ENCODE measurements at regions of chr7 and their contacts with region 1.

Region 1: DNA sequence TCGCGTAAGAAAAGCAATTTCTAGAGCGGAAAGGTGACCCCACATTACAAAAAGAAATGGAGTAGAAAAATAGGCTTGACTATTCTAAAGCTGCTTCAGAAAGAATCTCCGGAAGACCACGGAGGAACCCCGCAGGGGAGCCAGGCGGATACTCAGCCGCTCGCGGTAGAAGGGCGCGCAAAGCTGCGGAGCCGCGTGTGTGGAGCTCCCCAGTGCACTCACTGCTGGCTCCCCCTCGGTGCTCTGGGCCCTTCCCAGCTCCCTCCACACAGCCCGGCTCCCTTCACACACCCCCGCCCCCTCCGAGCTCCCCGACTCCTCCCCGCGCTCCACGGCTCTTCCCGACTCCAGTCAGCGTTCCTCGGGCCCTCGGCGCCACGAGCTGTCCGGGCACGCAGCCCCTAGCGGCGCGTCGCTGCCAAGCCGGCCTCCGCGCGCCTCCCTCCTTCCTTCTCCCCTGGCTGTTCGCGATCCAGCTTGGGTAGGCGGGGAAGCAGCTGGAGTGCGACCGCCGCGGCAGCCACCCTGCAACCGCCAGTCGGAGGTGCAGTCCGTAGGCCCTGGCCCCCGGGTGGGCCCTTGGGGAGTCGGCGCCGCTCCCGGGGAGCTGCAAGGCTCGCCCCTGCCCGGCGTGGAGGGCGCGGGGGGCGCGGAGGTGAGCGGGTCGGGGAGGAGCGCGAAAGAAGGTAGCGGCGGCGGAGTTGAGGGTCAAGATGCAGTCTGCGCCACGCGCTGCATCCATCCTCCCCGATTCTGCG is at the start of gene STEAP2:
- DNase-seq: peak; percentile 94
- H3K4me3 ChIP-seq: peak within 1 kb of the TSS; percentile 63 to 85 (median 67)
- H3K27ac ChIP-seq: peak within 1 kb of the TSS; percentile 75
- H3K4me1 ChIP-seq: peaks cover 12% of the 10 kb centered on the region
- H3K27me3 ChIP-seq: no peaks in the 10 kb centered on the region
- CTCF ChIP-seq: peak; percentile 63 to 84
- POLR2A ChIP-seq: peak; percentile 65
- total RNA-seq, gene STEAP2: 4.2 and 4.6 TPM in 2 replicates

Region 2: DNA sequence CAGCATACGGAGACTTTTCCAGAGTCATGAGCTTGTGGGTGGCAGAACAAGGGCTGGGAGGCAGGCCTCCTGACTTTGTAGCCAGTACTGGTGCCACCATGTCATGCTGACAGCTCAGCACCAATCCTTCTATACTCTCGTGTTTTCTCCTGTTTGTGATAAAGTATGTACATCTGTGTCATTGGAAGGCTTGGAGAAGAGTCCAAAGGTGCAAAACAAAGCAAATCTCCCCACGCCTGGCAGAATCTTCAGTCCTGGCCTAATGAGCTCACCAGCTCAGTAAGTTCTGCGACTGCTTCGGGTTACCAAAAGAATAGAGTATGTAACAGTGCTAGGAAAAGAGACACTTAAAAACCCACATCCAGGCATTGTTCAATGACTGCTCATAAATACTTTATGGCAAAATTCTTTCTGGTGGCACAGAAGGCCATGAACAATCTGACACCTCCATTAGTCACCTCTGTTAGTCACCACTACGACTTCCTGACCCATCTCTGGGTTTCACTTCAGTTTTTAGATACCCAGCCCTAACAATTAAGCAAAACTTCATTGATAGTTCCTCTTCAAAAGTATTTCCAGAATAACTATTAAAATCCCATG is 32.8 kb before region 1 on chr7:
- CTCF ChIA-PET with region 1: interaction called, 20 read pairs
- POLR2A ChIA-PET with region 1: interaction called, 5 read pairs
- dilution Hi-C with region 1: no loop called
- intact Hi-C with region 1: loop called (anchors 1 kb)
- DNase-seq: peak; percentile 85
- H3K4me3 ChIP-seq: peak overlapping the region in 1 of 3 experiments; percentile 5
- H3K27ac ChIP-seq: peak overlapping the region; percentile 93
- H3K4me1 ChIP-seq: peaks cover 36% of the 10 kb centered on the region
- H3K27me3 ChIP-seq: no peaks in the 10 kb centered on the region
- CTCF ChIP-seq: no peak
- POLR2A ChIP-seq: no peak

Region 3: GRCh38 chr7:90227259-90227658 is 15.7 kb after region 1 on chr7:
- CTCF ChIA-PET with region 1: interaction called, 7 read pairs
- POLR2A ChIA-PET with region 1: no interaction called
- dilution Hi-C with region 1: no loop called
- intact Hi-C with region 1: loop called (anchors 2 kb)
- DNase-seq: no peak
- H3K4me3 ChIP-seq: no peak overlapping the region
- H3K27ac ChIP-seq: no peak overlapping the region
- H3K4me1 ChIP-seq: peaks cover 1% of the 10 kb centered on the region
- H3K27me3 ChIP-seq: no peaks in the 10 kb centered on the region
- CTCF ChIP-seq: no peak
- POLR2A ChIP-seq: no peak

Region 4: DNA sequence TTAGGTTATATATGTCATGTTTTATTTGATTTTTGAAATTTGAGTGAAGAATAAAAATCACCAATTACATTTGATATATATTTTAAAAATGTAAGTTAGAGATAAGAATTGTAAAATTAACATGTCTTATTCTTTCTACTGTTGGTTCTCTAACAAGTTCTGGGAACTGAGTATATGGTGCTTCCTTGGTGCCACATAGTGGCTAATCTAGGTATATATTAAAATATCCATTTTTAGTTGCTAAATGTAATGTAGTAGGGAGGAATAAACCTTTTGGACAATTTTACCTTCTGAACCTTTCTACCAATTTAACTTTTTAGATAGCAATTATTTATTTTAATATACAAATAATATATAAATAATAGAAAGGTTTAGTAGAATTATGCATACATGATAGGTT is 50.9 kb after region 1 on chr7:
- CTCF ChIA-PET with region 1: interaction called, 10 read pairs
- POLR2A ChIA-PET with region 1: no interaction called
- dilution Hi-C with region 1: no loop called
- intact Hi-C with region 1: loop called (anchors 2 kb)
- DNase-seq: peak; percentile 54
- H3K4me3 ChIP-seq: no peak overlapping the region
- H3K27ac ChIP-seq: no peak overlapping the region
- H3K4me1 ChIP-seq: peaks cover 8% of the 10 kb centered on the region
- H3K27me3 ChIP-seq: no peaks in the 10 kb centered on the region
- CTCF ChIP-seq: peak in 1 of 2 donors; percentile 15
- POLR2A ChIP-seq: no peak

Region 5: DNA sequence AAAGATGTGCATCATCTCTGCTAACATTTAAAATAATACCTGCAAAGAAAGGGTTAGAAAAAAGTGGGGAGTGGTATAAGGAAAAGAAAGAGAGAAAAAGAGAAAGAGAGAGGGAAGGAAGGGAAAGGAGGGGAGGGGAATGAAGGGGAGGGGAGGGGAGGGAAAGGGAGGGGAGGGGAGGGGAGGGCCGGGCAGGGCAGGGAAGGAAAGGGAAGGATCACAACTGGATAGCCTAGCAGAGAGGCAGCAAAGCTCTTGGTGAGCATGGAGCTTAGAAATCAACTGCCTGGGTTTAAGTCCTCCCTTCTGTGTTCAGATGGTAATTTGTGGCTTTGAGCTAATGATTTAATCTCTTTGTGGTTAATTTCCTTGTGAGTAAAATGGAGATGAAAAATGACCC is 114.9 kb after region 1 on chr7:
- CTCF ChIA-PET with region 1: no interaction called
- POLR2A ChIA-PET with region 1: no interaction called
- dilution Hi-C with region 1: no loop called
- intact Hi-C with region 1: no loop called
- DNase-seq: no peak
- H3K4me3 ChIP-seq: no peak overlapping the region
- H3K27ac ChIP-seq: no peak overlapping the region
- H3K4me1 ChIP-seq: no peaks in the 10 kb centered on the region
- H3K27me3 ChIP-seq: peaks cover 17 to 50% of the 10 kb centered on the region in 2 experiments
- CTCF ChIP-seq: no peak
- POLR2A ChIP-seq: no peak

Region 6: GRCh38 chr7:90412458-90413184 is 201.1 kb after region 1 on chr7:
- CTCF ChIA-PET with region 1: interaction called, 5 read pairs
- POLR2A ChIA-PET with region 1: no interaction called
- dilution Hi-C with region 1: no loop called
- intact Hi-C with region 1: loop called (anchors 1 kb)
- DNase-seq: no peak
- H3K4me3 ChIP-seq: no peak overlapping the region
- H3K27ac ChIP-seq: no peak overlapping the region
- H3K4me1 ChIP-seq: peaks cover 11% of the 10 kb centered on the region
- H3K27me3 ChIP-seq: peaks cover 4 to 13% of the 10 kb centered on the region in 2 experiments
- CTCF ChIP-seq: peak in 1 of 2 donors; percentile 31
- POLR2A ChIP-seq: no peak